ENCODE measurements at regions of chr5 and their contacts with region 1.

Region 1: DNA sequence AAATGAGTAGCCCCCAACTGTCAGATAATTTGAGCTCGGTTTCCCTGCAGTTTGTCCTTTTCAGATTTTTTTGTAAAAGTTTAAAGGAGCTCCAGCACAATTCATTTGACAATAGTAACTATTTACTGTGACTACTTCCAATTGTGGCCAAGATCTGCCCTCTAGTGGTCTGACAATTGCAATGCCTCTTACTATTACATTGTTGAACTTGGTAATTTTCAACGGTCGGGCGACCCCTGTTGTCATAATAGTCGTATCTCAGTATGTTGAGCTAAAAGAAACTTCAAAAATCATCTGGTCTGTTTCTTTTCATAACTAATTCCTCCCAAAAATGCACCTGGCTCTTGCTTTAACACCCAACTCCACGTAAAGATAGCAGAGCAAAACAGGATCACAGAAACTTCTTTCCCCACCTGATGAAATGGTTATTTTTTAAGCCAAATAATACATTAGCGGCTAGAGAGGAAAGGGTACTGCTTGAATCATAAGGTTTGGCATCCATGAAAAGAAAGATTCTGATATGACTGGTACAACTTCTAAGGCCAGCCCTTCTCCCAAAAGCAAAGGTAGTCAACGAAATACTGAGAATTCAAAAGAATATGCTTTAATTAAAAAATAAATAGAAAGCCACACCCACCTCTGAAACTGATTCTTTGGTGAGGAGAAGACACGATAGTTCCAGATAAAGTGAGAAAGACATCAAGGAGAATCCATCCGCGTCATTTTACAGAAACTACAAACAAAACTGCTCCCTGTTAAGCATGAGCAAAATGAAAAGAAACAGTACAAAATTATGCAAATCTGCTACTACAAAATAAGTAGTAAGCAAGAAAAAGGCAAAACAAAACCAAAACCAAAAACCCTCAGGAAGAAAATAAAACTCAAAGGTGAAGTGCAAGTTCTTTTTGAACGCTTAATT is 76.9 kb upstream of the HTR4 start:
- DNase-seq: peak; percentile 65 to 69
- H3K4me3 ChIP-seq: no peak overlapping the region
- H3K27ac ChIP-seq: no peak overlapping the region
- H3K4me1 ChIP-seq: peaks cover 27% of the 10 kb centered on the region
- H3K27me3 ChIP-seq: no peaks in the 10 kb centered on the region
- CTCF ChIP-seq: peak; percentile 95

Region 2: GRCh38 chr5:147522435-147522834 is 1208.8 kb before region 1 on chr5:
- CTCF ChIA-PET with region 1: no interaction called
- POLR2A ChIA-PET with region 1: no interaction called
- intact Hi-C with region 1: no loop called
- DNase-seq: no peak
- H3K4me3 ChIP-seq: no peak overlapping the region
- H3K27ac ChIP-seq: no peak overlapping the region
- H3K4me1 ChIP-seq: no peaks in the 10 kb centered on the region
- H3K27me3 ChIP-seq: no peaks in the 10 kb centered on the region
- CTCF ChIP-seq: no peak

Region 3: GRCh38 chr5:147949711-147950573 is 781.3 kb before region 1 on chr5:
- CTCF ChIA-PET with region 1: interaction called, 7 read pairs
- POLR2A ChIA-PET with region 1: no interaction called
- intact Hi-C with region 1: loop called (anchors 1 kb)
- DNase-seq: peak in 1 of 2 experiments; percentile 42
- H3K4me3 ChIP-seq: no peak overlapping the region
- H3K27ac ChIP-seq: no peak overlapping the region
- H3K4me1 ChIP-seq: no peaks in the 10 kb centered on the region
- H3K27me3 ChIP-seq: no peaks in the 10 kb centered on the region
- CTCF ChIP-seq: peak; percentile 83

Region 4: DNA sequence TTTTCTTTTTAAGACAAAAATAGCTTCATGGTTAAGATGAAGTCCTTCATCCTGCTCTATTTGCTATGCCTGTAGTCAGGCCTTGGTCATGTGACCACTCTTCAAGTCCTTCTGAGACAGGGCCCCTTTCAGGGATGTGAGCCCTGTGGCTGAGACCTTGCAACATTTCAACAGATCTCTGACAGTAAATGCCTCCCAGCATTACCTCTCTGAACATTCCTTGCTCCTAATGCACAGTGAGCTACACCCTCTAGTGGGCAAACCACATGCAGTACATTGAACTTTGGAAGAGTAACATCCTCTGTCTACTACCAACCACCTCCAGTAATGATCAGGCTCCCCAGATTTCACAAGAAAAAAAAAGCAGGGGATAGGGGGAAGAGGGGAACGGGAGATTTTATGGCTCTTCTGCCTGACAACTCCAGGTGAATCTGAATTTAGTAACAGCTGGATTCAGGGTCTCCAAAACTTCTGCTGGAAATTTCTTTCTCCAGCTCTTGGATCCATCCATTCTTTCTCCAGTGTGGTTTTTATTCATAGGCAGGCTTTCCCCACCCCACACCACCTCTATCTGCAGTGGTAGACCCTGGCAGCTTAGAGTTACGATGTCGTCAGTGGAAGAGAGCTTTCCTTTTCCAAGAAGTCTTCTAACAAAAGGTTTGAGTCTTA is 356.4 kb before region 1 on chr5:
- CTCF ChIA-PET with region 1: interaction called, 3 read pairs
- POLR2A ChIA-PET with region 1: no interaction called
- intact Hi-C with region 1: loop called (anchors 10 kb)
- DNase-seq: peak; percentile 36 to 48
- H3K4me3 ChIP-seq: no peak overlapping the region
- H3K27ac ChIP-seq: no peak overlapping the region
- H3K4me1 ChIP-seq: no peaks in the 10 kb centered on the region
- H3K27me3 ChIP-seq: no peaks in the 10 kb centered on the region
- CTCF ChIP-seq: peak; percentile 84

Region 5: GRCh38 chr5:148998174-148998797 is 267.1 kb after region 1 on chr5:
- CTCF ChIA-PET with region 1: interaction called, 5 read pairs
- POLR2A ChIA-PET with region 1: no interaction called
- intact Hi-C with region 1: loop called (anchors 1 kb)
- DNase-seq: peak; percentile 46 to 54
- H3K4me3 ChIP-seq: no peak overlapping the region
- H3K27ac ChIP-seq: no peak overlapping the region
- H3K4me1 ChIP-seq: peaks cover 46% of the 10 kb centered on the region
- H3K27me3 ChIP-seq: no peaks in the 10 kb centered on the region
- CTCF ChIP-seq: peak; percentile 85

Region 6: DNA sequence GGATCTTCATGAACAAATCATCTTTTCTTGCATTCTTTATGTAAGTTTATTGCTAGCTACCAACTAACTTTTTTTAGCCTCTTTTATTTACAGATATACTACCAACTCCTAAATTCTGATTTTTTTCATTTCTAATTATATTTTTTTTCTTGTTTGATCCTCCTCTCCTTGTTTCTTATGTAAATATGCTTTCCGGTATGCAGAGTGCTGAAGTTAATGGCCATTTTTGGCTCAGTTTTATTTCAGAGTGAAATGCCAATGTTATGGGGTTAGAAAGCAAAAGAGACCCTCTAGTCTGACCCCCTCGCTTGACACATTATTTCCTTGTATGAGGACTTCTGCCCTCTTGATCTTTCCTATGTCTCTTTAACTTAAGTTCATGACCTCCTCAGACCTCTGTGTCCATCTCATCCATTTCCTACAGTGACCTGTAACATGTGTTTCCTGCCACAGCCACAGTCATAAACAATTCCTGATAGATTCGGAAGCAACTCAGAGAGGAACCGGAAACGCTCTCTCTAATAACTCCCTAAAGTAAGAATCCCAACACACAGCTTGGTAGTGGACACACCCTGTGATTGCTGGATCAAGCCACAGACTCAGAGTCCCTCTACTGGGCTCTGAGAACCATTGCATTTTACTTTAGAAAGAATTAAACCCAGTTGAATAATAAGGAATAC is 497.6 kb after region 1 on chr5:
- CTCF ChIA-PET with region 1: no interaction called
- POLR2A ChIA-PET with region 1: no interaction called
- intact Hi-C with region 1: loop called (anchors 1 kb)
- DNase-seq: peak; percentile 40 to 53
- H3K4me3 ChIP-seq: no peak overlapping the region
- H3K27ac ChIP-seq: no peak overlapping the region
- H3K4me1 ChIP-seq: peaks cover 18% of the 10 kb centered on the region
- H3K27me3 ChIP-seq: no peaks in the 10 kb centered on the region
- CTCF ChIP-seq: peak; percentile 68

Region 7: GRCh38 chr5:149561848-149562247 is 830.6 kb after region 1 on chr5:
- CTCF ChIA-PET with region 1: no interaction called
- POLR2A ChIA-PET with region 1: no interaction called
- intact Hi-C with region 1: loop called (anchors 10 kb)
- DNase-seq: peak; percentile 48 to 95
- H3K4me3 ChIP-seq: peak overlapping the region; percentile 43; the same call in 1 of the 2 replicates
- H3K27ac ChIP-seq: peak overlapping the region; percentile 97
- H3K4me1 ChIP-seq: peaks cover 53% of the 10 kb centered on the region
- H3K27me3 ChIP-seq: no peaks in the 10 kb centered on the region
- CTCF ChIP-seq: no peak